ENCODE measurements at regions of chr22 and their contacts with region 1.

Region 1: DNA sequence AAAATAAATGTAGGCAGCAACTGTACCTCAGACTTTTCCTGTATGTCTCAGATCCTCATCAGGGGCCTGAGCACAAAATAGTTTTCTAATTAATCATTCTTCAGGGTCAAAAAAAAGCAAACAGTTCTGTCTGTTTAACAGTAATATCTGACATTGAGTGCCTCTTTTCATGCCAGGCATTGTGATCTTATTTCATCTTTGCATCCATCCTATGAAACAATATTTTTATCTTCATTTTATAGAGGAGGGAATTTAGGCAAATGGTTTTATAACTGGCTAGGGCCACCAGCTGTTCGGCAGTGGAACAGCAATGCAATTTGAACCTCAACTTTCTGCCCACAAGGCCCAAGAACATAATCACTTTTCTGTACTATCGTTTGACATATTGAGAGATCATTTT is 145.6 kb downstream of the WNT7B start:
- DNase-seq: no peak
- ATAC-seq: no peak

Region 2: DNA sequence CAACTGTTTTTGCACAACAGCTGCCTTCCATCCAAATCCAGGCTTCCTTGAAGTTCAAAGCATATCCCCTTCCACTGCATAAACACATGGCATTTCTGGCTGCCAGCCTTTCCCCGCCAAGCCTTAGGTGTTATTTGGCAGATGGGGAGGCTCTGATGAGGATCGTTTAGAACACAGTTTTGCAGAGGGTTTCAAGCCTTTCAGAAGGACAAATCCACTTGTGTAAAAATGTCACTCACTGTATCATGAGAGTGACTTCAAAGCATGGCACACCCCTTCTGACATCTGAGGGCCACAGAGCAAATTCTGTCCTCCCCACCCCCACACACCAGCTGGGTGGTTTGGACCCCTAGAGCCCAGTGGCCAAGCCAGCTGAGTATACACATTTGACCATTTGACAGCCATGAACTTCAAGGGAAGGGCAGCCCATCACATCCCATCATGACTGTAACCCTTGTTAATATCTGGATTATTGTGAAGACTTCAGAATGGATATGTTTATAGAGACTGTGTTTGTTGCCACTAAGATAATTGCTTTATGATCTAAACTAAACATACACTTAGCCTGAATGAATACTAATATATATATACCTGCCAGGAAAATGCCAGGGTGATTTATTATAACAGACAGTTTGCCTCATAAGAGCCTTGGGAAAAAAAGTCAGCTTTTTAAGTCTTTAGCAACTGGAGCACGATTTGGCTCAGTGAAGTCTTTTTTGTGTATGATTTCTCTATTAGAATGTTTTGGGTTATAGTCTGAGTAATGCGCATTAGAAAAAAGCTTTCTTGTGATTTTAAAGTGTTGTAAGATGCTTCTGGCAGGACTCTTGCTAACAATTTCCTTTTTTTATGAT is 296.8 kb before region 1 on chr22:
- intact Hi-C with region 1: no loop called
- DNase-seq: no peak
- ATAC-seq: no peak

Region 3: GRCh38 chr22:45645526-45646414 is 185.6 kb before region 1 on chr22:
- intact Hi-C with region 1: loop called in 1 of 2 experiments (anchors 10 kb)
- DNase-seq: peak; percentile 72
- ATAC-seq: peak; percentile 95 to 96

Measured in left cardiac atrium (tissue), 4 donors.